Activated T-helper 2 cell treated with anti-CD3 and anti-CD28 coated beads, Interferon-gamma antibody, Interleukin-2, Interleukin-4, amounts not matched to agents 10 μg/mL and 5 μg/mL and 100 μg/mL, durations not matched to agents 14 hours and 24 hours and 36 hours (primary cell): ENCODE measurements at regions of chr3 and their contacts with region 1.

Region 1: GRCh38 chr3:126389112-126389793 is 5.5 kb upstream of the CFAP100 start:
- DNase-seq: peak; percentile 14
- H3K4me3 Mint-ChIP-seq: no peak overlapping the region
- H3K27ac Mint-ChIP-seq: no peak overlapping the region
- H3K4me1 Mint-ChIP-seq: peaks cover 3% of the 10 kb centered on the region
- H3K27me3 Mint-ChIP-seq: peaks cover 49% of the 10 kb centered on the region

Region 2: DNA sequence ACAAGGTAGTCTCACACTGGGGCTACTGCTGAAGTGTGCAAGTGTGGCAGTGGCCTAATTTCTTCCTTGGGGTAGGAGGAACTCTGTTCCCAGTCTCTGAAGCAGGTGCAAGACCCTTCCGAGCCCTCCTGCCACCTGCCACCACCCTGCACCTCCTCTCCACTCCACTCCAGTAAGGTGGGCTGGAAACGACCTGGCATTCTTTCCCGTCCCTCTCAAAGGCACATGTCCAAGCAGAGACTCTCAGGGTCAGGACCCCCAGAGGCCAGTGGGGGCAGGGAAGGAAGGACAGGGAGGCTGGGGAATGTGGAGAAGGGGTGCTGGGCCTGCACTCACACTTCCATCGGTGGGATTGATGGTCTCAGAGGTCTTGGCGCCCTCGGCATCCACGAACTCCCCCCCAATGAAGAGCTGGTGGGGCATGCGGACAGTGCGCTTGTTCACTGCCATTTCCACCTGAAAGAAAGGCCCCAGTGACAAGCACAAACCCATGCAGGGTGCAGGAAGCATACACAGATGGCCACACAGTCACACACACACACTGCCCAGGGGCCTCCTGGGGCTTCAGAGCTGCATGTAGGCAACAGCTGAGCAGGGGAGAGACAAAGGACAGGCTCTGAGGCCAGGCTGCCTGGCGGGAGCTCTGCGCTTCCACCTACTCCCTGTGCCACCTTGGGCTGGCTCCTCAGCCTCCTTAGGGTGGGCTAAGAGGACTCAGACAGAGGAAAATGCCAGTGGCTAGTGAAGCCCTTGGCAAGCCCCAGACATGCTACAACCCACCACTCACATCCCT is 252.6 kb before region 1 on chr3:
- intact Hi-C with region 1: loop called (anchors 5 kb)
- DNase-seq: no peak
- H3K4me3 Mint-ChIP-seq: no peak overlapping the region
- H3K27ac Mint-ChIP-seq: no peak overlapping the region
- H3K4me1 Mint-ChIP-seq: no peaks in the 10 kb centered on the region
- H3K27me3 Mint-ChIP-seq: peaks cover 15% of the 10 kb centered on the region